MCF 10A (cell line): ENCODE measurements at regions of chr15 and their contacts with region 1.

Region 1: GRCh38 chr15:34721802-34722795 is 32.7 kb downstream of the GJD2 start:
- DNase-seq: peak; percentile 66
- H3K4me3 Mint-ChIP-seq: peak overlapping the region; percentile 53
- H3K27ac Mint-ChIP-seq: peak overlapping the region; percentile 47
- H3K4me1 Mint-ChIP-seq: peaks cover 9% of the 10 kb centered on the region
- H3K27me3 Mint-ChIP-seq: no peaks in the 10 kb centered on the region
- CTCF ChIP-seq: no peak

Region 2: DNA sequence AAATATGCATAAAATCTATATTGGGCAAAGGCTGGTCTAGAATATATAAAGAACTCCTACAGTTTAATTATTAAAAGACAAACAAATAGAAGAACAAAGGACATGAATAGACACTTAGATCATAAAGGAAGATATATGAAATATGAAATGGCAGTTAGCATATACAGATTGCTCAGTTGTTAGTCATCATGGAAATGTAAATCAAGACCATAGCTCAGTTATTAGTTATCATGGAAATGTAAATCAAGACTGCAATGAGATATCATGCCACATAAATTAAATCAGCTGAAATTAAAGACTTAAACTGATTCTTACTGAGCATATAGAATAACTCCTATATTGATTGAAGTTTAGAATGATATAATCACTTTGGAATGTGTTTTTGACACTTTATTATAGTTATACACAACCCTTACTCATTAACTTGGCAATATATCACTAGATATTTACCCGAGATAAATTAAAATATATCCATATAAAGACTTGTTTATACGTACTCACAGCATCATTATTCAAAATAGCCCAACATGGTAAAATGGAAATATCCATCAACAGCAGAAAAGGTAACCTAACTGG is 93.4 kb before region 1 on chr15:
- CTCF ChIA-PET with region 1: no interaction called
- POLR2A ChIA-PET with region 1: no interaction called
- intact Hi-C with region 1: loop called (anchors 5 kb)
- DNase-seq: no peak
- H3K4me3 Mint-ChIP-seq: no peak overlapping the region
- H3K27ac Mint-ChIP-seq: peak overlapping the region; percentile 67
- H3K4me1 Mint-ChIP-seq: peaks cover 20% of the 10 kb centered on the region
- H3K27me3 Mint-ChIP-seq: no peaks in the 10 kb centered on the region
- CTCF ChIP-seq: no peak

Region 3: GRCh38 chr15:34759347-34759746 is 37.2 kb after region 1 on chr15:
- CTCF ChIA-PET with region 1: no interaction called
- POLR2A ChIA-PET with region 1: no interaction called
- intact Hi-C with region 1: no loop called
- DNase-seq: no peak
- H3K4me3 Mint-ChIP-seq: no peak overlapping the region
- H3K27ac Mint-ChIP-seq: no peak overlapping the region
- H3K4me1 Mint-ChIP-seq: no peaks in the 10 kb centered on the region
- H3K27me3 Mint-ChIP-seq: peaks cover 98% of the 10 kb centered on the region
- CTCF ChIP-seq: no peak